A673 (cell line): ENCODE measurements at regions of chr3 and their contacts with region 1.

Region 1: DNA sequence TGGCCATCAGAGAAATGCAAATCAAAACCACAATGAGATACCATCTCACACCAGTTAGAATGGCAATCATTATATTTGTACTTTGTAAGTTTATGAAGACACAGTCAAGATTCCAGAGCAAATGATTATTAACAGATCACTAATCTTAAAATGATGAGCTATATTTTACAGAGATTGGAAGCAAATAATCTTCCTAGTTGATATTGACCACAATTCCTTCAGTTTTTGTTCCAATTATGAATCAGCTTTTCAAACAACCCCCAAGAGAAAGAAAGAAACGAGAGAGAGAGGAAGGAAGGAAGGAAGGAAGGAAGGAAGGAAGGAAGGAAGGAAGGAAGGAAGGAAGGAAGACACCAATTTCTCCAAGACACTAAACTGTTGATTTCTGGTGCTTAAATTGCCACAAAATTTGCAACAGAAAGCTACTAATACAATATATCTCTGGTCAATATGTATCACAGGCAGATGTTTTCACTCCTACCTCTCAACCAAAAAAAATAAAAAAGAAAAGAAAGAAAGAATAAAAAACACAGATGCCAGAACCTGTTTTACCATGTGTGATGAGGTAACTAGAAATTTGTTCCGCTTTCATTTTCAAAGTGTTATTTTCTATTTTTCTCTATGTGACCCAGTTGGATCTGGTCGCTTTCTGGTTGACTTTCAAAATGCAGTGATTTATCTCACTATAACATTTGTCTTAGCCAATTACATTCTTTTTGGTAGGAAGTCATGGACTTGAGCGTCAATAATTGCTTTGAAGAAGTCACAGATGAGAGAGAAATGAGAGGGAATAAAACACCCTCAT is 1609.6 kb downstream of the SI start:
- DNase-seq: peak; percentile 88
- H3K4me3 ChIP-seq: no peak overlapping the region
- H3K27ac ChIP-seq: peak overlapping the region; percentile 98
- H3K4me1 ChIP-seq: peaks cover 14% of the 10 kb centered on the region
- H3K27me3 ChIP-seq: no peaks in the 10 kb centered on the region
- CTCF ChIP-seq: no peak

Region 2: GRCh38 chr3:163056874-163057497 is 411.7 kb before region 1 on chr3:
- CTCF ChIA-PET with region 1: interaction called, 4 read pairs
- POLR2A ChIA-PET with region 1: no interaction called
- intact Hi-C with region 1: loop called (anchors 5 kb)
- DNase-seq: peak; percentile 88
- H3K4me3 ChIP-seq: no peak overlapping the region
- H3K27ac ChIP-seq: peak overlapping the region; percentile 41
- H3K4me1 ChIP-seq: no peaks in the 10 kb centered on the region
- H3K27me3 ChIP-seq: no peaks in the 10 kb centered on the region
- CTCF ChIP-seq: peak; percentile 67

Region 3: DNA sequence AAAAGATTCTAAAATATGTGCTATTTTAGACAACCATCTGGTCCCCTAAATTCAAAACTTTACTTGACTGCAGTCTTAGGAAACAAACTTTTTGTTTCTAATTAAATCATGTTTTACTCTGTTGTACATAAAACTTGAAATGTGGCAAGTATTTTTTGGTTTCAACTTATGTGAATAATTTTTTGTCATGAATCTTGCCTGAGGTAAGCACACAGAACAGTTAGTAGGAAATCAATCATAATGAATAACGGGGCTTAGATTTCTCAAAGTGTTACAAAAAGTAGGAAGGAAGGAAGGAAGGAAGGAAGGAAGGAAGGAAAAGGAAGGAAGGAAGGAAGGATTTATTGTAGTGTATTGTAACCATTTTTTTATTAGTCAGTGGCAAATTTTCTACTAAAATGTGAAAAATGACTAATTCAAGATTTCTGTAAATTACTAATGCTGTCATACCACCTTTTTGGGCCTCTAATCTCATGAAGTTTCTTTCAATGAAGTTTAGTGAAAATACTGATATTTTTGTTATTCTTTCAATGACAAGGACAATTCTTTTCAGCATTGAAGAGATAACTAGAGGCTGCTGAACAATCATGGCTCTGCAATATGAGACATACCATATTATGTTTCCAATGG is 282.9 kb before region 1 on chr3:
- CTCF ChIA-PET with region 1: no interaction called
- POLR2A ChIA-PET with region 1: no interaction called
- intact Hi-C with region 1: loop called (anchors 1 kb)
- DNase-seq: peak; percentile 92
- H3K4me3 ChIP-seq: no peak overlapping the region
- H3K27ac ChIP-seq: peak overlapping the region; percentile 99
- H3K4me1 ChIP-seq: peaks cover 22% of the 10 kb centered on the region
- H3K27me3 ChIP-seq: no peaks in the 10 kb centered on the region
- CTCF ChIP-seq: no peak

Region 4: GRCh38 chr3:163364717-163365116 is 104.0 kb before region 1 on chr3:
- CTCF ChIA-PET with region 1: no interaction called
- POLR2A ChIA-PET with region 1: no interaction called
- intact Hi-C with region 1: no loop called
- DNase-seq: no peak
- H3K4me3 ChIP-seq: no peak overlapping the region
- H3K27ac ChIP-seq: no peak overlapping the region
- H3K4me1 ChIP-seq: peaks cover 4% of the 10 kb centered on the region
- H3K27me3 ChIP-seq: no peaks in the 10 kb centered on the region
- CTCF ChIP-seq: no peak

Region 5: DNA sequence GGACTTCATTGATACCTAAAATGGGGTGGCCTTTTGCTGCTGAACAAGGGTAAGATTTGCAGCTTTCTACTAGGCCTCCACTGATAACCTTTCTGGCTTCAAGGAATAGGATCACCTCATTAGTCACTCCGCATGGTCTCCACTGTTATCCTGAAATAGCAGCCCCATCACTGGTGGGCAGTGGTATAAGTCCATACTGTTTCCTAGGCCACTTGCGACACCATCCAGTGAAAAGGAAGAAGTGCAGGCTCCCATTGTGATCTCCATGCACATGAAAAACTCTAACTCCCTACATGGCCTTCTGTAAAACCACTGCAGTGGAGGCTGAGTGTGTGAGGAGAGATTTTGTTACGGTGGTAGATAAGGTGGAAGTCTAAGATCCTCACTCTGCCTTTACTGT is 153.7 kb after region 1 on chr3:
- CTCF ChIA-PET with region 1: no interaction called
- POLR2A ChIA-PET with region 1: no interaction called
- intact Hi-C with region 1: no loop called
- DNase-seq: peak; percentile 57
- H3K4me3 ChIP-seq: no peak overlapping the region
- H3K27ac ChIP-seq: peak overlapping the region; percentile 22
- H3K4me1 ChIP-seq: no peaks in the 10 kb centered on the region
- H3K27me3 ChIP-seq: no peaks in the 10 kb centered on the region
- CTCF ChIP-seq: peak; percentile 44; the same call in 1 of the 2 replicates

Region 6: DNA sequence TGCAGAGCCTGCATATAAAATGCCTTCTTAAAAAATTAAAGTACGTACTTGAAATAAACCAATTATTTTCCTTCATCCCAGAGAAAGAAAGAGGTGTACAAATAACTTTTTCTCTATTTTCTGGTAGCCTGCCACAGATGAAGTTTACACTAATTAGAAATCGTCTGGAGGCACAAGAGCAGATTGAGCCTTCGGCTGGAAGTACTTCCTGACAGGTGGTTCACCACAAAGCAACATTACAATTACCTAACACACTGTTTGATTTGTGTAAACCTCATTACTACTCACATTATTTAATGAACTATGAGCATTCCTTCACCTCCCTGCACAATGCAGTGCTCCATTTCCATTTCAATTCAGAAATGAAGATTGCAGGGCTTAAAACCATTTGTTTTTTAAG is 753.5 kb after region 1 on chr3:
- CTCF ChIA-PET with region 1: no interaction called
- POLR2A ChIA-PET with region 1: interaction called, 15 read pairs
- intact Hi-C with region 1: no loop called
- DNase-seq: no peak
- H3K4me3 ChIP-seq: no peak overlapping the region
- H3K27ac ChIP-seq: no peak overlapping the region
- H3K4me1 ChIP-seq: no peaks in the 10 kb centered on the region
- H3K27me3 ChIP-seq: no peaks in the 10 kb centered on the region
- CTCF ChIP-seq: no peak

Region 7: DNA sequence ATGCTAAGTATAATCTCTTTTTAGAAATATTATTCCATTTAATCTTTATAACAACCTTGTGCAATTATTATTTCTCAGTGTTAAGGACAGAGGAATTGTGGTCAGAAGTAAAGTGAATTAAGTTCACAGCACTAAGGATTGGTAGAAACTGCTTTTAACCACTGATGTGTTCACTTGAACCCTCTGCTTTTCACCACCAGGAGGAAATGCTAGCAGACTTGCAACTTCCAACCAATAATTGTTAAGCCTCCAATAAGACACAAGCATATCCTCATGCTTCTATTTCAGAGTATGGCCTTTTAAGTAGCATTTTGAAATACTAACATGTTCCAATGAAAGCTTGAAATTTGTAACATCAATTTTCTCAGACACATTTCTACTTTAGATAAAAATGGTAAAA is 1082.1 kb after region 1 on chr3:
- CTCF ChIA-PET with region 1: no interaction called
- POLR2A ChIA-PET with region 1: no interaction called
- intact Hi-C with region 1: no loop called
- DNase-seq: no peak
- H3K4me3 ChIP-seq: no peak overlapping the region
- H3K27ac ChIP-seq: no peak overlapping the region
- H3K4me1 ChIP-seq: no peaks in the 10 kb centered on the region
- H3K27me3 ChIP-seq: no peaks in the 10 kb centered on the region
- CTCF ChIP-seq: no peak